Tibial artery (tissue), 4 donors: ENCODE measurements at regions of chr19 and their contacts with region 1.

Region 1: DNA sequence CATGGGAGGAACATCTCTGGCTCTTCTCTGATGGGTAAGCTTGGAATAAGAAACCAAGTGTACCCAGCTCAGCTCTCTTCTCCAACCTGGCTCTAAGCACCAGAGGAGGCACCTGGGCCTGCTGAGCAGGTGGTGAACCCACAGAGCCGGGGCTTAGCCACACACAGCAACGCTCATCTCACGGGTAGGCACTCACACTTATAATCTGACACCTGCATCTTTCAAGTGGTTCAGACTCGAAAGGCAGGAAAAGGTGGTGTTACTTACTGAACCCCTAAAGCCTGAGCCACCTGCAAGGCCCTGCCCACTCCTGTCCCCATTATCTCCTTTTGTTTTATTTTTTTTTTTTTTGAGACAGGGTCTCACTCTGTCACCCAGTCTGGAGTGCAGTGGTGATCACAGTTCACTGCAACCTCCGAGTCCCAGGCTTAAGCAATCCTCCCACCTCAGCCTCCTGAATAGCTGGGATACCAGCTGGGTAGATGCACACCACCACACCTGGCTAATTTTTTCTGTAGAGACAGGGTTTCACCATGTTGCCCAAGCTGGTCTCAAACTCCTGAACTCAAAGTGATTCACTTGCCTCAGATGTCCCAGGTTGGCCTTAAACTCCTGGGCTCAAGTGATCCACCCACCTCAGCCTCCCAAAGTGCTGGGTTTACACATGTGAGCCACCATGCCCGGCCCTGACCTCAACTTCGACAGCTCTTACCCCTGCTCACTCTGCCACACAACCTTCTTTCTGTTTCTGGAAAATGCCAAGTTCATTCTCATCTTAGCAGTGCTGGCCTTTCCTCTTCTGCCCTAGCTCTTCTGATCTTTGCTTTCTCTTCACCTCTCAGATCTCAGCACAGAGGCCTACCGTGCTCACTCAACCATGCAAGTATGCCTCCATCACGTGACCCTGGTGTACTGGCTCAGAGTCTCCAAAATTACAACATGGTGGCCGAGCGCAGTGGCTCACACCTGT is 9.7 kb downstream of the FBXL12 start:
- DNase-seq: no peak
- H3K4me3 ChIP-seq: no peak overlapping the region
- H3K27ac ChIP-seq: no peak overlapping the region
- H3K4me1 ChIP-seq: no peaks in the 10 kb centered on the region
- H3K27me3 ChIP-seq: no peaks in the 10 kb centered on the region
- CTCF ChIP-seq: no peak

Region 2: DNA sequence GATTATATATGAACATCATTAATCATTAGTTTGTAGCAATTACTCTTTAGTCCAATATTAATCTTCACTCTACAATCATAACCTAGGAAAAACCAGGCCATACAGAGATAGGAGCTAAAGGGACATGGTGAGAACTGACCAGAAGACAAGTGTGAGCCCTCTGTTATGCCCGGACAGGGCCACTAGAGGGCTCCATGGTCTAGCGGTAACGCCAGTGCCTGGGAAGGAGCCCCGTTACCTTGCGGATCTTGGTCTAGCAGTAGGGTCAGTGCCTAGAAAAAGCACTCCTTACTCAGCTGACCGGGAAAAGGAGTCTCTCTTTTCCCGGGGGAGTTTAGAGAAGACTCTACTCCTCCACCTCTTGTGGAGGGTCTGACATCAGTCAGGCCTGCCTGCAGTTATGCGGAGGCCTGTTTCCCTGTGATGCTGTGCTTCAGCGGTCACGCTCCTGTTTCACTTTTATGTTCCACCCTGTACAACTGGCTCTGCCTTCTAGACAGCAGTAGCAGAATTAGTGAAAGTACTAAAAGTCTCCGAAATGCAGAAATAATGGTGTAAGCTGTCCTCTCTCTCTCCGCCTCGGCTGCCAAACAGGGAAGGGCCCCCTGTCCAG is 603.5 kb before region 1 on chr19:
- intact Hi-C with region 1: loop called (anchors 10 kb)
- DNase-seq: peak; percentile 63 to 81
- H3K4me3 ChIP-seq: peak overlapping the region; percentile 32 to 36
- H3K27ac ChIP-seq: no peak overlapping the region
- H3K4me1 ChIP-seq: peaks cover 0 to 4% (median 0%) of the 10 kb centered on the region in 4 donors
- H3K27me3 ChIP-seq: peaks cover 0 to 3% of the 10 kb centered on the region in 2 donors
- CTCF ChIP-seq: peak; percentile 82 to 92

Region 3: GRCh38 chr19:9727644-9728043 is 81.5 kb before region 1 on chr19:
- intact Hi-C with region 1: no loop called
- DNase-seq: no peak
- H3K4me3 ChIP-seq: no peak overlapping the region
- H3K27ac ChIP-seq: no peak overlapping the region
- H3K4me1 ChIP-seq: no peaks in the 10 kb centered on the region
- H3K27me3 ChIP-seq: no peaks in the 10 kb centered on the region
- CTCF ChIP-seq: no peak